Mammary epithelial cell (primary cell): ENCODE measurements at regions of chr22 and their contacts with region 1.

Region 1: DNA sequence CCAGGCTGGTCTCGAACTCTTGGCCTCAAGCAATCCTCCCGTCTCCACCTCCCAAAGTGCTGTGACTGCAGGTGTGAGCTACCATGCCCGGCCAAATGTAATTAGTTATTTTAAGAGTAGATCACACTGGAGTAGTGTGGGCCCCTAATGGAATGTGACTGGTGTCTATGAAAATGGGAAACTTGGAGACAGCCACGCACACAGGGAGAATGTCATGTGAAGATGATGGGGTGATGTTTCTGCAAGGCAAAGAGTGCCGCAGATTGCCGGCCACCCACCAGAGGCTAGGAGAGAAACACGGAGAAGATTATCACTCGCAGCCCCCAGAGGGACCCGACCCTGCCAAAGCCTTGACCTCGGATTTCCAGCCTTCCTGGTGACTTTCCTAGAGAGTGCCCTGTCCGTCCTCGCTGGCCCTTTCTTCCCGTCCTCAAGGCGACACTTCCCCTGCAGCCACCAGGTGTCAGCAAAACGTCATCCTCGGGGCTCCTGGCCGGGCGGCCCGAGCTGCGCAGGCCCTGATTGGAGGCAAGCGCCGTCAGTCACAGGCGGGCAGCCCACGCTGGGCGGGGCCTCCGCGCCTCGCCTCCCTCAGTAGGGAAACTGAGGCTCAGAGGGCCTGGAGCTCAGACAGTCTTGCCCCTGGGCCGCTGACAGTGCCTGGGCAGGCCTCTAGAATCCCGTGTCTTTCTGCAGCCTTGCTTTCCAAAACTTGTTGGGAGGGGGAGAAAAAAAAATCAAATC is 16.3 kb downstream of the CRYBB2 start:
- DNase-seq: peak; percentile 67
- H3K4me3 ChIP-seq: no peak overlapping the region
- H3K27ac ChIP-seq: no peak overlapping the region
- H3K4me1 ChIP-seq: no peaks in the 10 kb centered on the region
- H3K27me3 ChIP-seq: no peaks in the 10 kb centered on the region
- CTCF ChIP-seq: peak; percentile 60 to 87

Region 2: DNA sequence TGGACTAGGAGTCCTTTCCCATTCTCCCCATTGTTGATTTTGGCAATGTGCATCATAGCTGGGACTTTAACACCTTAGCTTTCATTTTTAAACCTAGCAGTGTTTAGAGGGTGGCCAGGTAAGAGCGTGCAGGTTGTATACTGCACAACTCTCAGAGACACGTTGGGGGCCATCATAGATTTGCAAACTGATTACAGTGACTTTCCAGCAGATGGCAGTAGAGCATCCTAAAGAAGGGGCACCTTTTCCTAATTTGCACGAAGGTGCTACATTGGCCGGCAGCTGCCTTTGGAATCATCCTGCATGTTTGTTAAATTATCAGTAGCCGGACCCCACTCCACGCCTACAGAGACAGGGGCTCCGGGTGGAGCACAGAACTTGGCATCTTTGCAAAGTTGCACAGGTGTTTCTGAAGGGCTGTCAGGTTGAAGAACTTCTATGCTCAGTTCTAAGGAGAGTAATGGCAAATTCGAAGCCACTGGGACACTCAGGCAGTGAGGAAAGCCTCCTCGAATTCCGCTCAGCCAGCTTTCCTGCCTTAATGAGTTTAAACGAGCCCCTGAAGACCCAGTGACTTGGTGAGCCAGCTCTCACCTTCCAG is 296.9 kb before region 1 on chr22:
- CTCF ChIA-PET with region 1: no interaction called
- dilution Hi-C with region 1: no loop called
- in situ Hi-C with region 1: no loop called
- intact Hi-C with region 1: loop called (anchors 10 kb)
- DNase-seq: peak; percentile 48
- H3K4me3 ChIP-seq: no peak overlapping the region
- H3K27ac ChIP-seq: no peak overlapping the region
- H3K4me1 ChIP-seq: peaks cover 17% of the 10 kb centered on the region
- H3K27me3 ChIP-seq: no peaks in the 10 kb centered on the region
- CTCF ChIP-seq: peak; percentile 70 to 76

Region 3: GRCh38 chr22:25148149-25148691 is 87.5 kb before region 1 on chr22:
- CTCF ChIA-PET with region 1: no interaction called
- dilution Hi-C with region 1: no loop called
- in situ Hi-C with region 1: no loop called
- intact Hi-C with region 1: no loop called
- DNase-seq: no peak
- H3K4me3 ChIP-seq: no peak overlapping the region
- H3K27ac ChIP-seq: no peak overlapping the region
- H3K4me1 ChIP-seq: no peaks in the 10 kb centered on the region
- H3K27me3 ChIP-seq: no peaks in the 10 kb centered on the region
- CTCF ChIP-seq: no peak

Region 4: GRCh38 chr22:25202290-25202921 is 33.3 kb before region 1 on chr22:
- CTCF ChIA-PET with region 1: no interaction called
- dilution Hi-C with region 1: no loop called
- in situ Hi-C with region 1: no loop called
- intact Hi-C with region 1: loop called (anchors 1 kb)
- DNase-seq: peak; percentile 33
- H3K4me3 ChIP-seq: no peak overlapping the region
- H3K27ac ChIP-seq: no peak overlapping the region
- H3K4me1 ChIP-seq: no peaks in the 10 kb centered on the region
- H3K27me3 ChIP-seq: no peaks in the 10 kb centered on the region
- CTCF ChIP-seq: peak; percentile 84 to 92

Region 5: GRCh38 chr22:25334162-25334490 is 98.4 kb after region 1 on chr22:
- CTCF ChIA-PET with region 1: no interaction called
- dilution Hi-C with region 1: no loop called
- in situ Hi-C with region 1: no loop called
- intact Hi-C with region 1: loop called (anchors 1 kb)
- DNase-seq: peak; percentile 21
- H3K4me3 ChIP-seq: no peak overlapping the region
- H3K27ac ChIP-seq: no peak overlapping the region
- H3K4me1 ChIP-seq: no peaks in the 10 kb centered on the region
- H3K27me3 ChIP-seq: no peaks in the 10 kb centered on the region
- CTCF ChIP-seq: peak; percentile 40 to 67

Region 6: GRCh38 chr22:25447686-25448434 is 212.1 kb after region 1 on chr22:
- CTCF ChIA-PET with region 1: no interaction called
- dilution Hi-C with region 1: no loop called
- in situ Hi-C with region 1: no loop called
- intact Hi-C with region 1: loop called (anchors 5 kb)
- DNase-seq: peak; percentile 80
- H3K4me3 ChIP-seq: peak overlapping the region; percentile 80 to 93 (median 90)
- H3K27ac ChIP-seq: peak overlapping the region; percentile 82
- H3K4me1 ChIP-seq: peaks cover 21% of the 10 kb centered on the region
- H3K27me3 ChIP-seq: no peaks in the 10 kb centered on the region
- CTCF ChIP-seq: peak; percentile 88 to 94

Region 7: DNA sequence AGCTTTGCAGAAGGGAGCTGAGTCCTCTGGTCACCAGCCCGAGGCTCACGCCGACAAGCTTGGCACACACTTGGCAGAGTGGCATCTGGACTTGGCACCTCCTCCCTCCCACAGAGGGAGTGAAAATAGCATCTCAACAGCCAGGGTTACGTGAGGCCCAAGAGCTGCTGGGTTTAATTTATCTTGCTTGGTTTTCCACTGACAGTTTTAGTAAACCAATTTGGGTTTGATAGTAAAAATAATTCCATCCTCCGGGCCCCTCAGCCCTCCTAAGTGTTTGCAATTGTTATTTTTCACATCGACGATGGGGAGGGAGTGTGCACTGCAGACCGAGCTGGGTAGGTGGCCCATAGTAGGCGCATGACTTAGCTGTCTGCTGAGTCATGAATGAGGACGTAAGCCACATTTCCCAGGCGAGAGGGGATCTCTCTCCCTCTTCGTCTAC is 1085.8 kb after region 1 on chr22:
- CTCF ChIA-PET with region 1: no interaction called
- dilution Hi-C with region 1: no loop called
- in situ Hi-C with region 1: loop called in 1 of 2 experiments (anchors 25 kb)
- intact Hi-C with region 1: loop called (anchors 10 kb)
- DNase-seq: no peak
- H3K4me3 ChIP-seq: no peak overlapping the region
- H3K27ac ChIP-seq: no peak overlapping the region
- H3K4me1 ChIP-seq: peaks cover 17% of the 10 kb centered on the region
- H3K27me3 ChIP-seq: no peaks in the 10 kb centered on the region
- CTCF ChIP-seq: no peak

Region 8: DNA sequence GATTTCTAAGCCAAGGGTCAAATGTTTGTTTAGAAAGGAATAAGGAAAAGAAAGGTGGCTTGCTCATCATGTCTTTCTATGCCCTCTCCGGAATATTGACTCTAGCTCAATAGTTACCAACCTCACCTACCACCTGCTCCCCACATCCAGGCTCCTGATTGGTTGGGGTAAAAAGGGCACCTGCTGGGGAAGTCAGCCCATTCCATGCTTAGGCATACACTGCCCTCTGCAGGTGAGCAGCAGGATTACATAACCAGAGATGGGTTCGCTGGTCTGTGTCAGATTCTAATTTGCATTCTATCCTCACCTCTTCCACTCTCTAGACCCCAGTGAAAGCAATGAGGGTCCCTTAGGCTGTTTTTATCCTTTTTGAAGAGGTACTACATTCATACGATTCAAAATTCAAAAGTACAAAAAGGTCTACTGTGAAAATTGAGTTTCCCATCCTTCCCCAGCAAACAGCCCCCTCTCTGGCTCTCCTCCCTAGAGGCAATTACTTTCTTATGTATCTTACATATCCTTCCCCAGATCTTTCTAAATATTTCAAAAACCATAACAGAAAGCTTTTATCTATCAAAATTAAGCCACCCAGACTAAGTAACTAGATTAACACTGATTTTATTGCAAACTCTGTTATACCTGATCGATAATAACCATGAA is 1095.4 kb after region 1 on chr22:
- CTCF ChIA-PET with region 1: no interaction called
- dilution Hi-C with region 1: no loop called
- in situ Hi-C with region 1: loop called in 1 of 2 experiments (anchors 25 kb)
- intact Hi-C with region 1: loop called (anchors 10 kb)
- DNase-seq: peak; percentile 57
- H3K4me3 ChIP-seq: no peak overlapping the region
- H3K27ac ChIP-seq: no peak overlapping the region
- H3K4me1 ChIP-seq: no peaks in the 10 kb centered on the region
- H3K27me3 ChIP-seq: no peaks in the 10 kb centered on the region
- CTCF ChIP-seq: peak; percentile 92